HepG2 (cell line): ENCODE measurements at regions of chrX and their contacts with region 1.

Region 1: DNA sequence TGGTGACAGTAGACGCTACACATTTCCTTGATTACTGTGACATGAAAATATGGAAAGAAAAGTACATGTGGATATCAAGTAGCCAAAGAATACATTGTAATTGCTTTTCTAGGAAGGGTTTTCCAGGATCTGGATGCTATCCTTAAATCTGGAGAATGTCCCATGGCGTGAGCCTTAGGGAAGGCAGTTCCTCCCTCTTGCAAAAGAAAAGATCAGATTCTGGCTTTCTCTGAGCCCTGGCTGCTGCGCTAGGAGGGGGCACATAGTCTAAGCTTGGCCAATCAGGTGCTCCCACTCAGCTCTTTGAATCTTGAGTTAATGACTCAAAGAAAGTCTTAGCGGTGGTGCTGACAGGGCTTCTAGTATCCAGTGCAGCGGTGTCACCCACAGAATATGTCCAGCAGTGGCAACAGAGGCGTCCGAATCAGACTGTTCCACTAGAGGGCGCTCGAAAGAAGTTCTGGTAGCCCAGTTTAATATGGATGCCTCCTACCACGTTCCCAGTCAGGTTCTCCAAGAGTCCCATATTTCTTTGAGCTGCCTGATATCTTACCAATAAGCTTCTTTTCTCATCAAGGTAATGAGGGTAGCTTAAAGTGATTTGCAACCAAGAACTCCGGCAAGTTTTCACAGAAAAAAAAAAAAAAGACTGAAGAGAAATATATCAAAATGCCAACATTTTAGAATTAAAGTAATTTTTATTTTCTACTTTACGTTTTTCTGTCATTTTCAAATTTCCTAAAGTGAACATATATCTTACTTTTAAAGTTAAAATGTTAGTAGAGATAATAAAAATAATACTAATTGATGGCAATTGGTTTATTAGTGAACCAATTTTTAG is 213.4 kb upstream of the S100G start:
- DNase-seq: peak; percentile 44
- ATAC-seq: peak; percentile 91
- H3K4me3 ChIP-seq: no peak overlapping the region
- H3K27ac ChIP-seq: no peak overlapping the region
- H3K4me1 ChIP-seq: no peaks in the 10 kb centered on the region
- H3K27me3 ChIP-seq: no peaks in the 10 kb centered on the region
- CTCF ChIP-seq: peak; percentile 68
- EP300 ChIP-seq: no peak
- POLR2A ChIP-seq: no peak
- RAD21 ChIP-seq: no peak

Region 2: DNA sequence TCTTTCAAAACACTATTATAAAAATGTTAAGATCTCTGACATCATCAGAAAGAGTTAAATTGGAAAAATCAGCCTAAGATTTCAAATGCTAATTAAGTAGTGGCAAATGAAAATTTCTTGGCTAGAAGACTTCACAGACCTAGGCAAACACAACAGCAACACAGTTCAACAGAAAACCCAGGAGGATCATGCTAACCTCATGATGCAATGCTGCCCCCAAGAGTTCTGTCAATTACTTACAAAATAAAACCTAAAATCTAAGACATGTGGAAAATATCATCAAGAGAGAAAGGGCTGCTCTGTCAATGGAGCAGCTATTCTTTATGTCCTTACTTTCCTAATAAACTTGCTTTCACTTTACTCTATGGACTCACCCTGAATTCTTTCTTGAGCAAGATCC is 234.4 kb after region 1 on chrX:
- CTCF ChIA-PET with region 1: interaction called, 3 read pairs
- POLR2A ChIA-PET with region 1: no interaction called
- in situ Hi-C with region 1: no loop called
- intact Hi-C with region 1: loop called (anchors 1 kb)
- DNase-seq: peak; percentile 5
- ATAC-seq: no peak
- H3K4me3 ChIP-seq: no peak overlapping the region
- H3K27ac ChIP-seq: no peak overlapping the region
- H3K4me1 ChIP-seq: no peaks in the 10 kb centered on the region
- H3K27me3 ChIP-seq: no peaks in the 10 kb centered on the region
- CTCF ChIP-seq: peak; percentile 53
- EP300 ChIP-seq: no peak
- POLR2A ChIP-seq: no peak
- RAD21 ChIP-seq: no peak

Region 3: DNA sequence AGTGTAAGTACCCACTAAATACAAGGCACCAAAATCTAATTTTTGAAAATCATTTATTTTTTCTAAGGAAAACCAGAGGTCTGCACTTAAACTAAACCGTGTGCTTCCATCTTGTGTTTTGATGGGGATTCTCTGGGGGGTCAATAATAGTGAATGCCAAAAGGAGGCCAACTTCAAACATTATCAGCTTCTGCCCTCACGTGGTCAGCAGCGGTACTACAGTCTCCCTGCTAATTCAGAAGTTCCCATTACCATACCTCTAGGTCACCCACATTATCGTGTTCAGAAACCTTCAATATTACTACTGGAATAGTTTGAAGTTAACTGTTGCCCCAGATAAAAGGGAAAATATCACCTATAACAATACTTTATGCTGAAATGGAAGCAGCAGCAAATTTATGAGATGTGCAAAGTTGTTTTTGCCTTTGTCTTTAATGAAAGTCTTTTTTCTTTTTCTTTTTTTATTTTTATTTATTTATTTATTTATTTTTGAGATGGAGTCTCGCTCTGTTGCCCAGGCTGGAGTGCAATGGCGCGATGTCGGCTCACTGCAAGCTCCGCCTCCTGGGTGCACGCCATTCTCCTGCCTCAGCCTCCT is 258.6 kb after region 1 on chrX:
- CTCF ChIA-PET with region 1: no interaction called
- POLR2A ChIA-PET with region 1: no interaction called
- in situ Hi-C with region 1: no loop called
- intact Hi-C with region 1: loop called (anchors 1 kb)
- DNase-seq: peak; percentile 29
- ATAC-seq: peak; percentile 62; the same call in 2 of the 3 replicates
- H3K4me3 ChIP-seq: no peak overlapping the region
- H3K27ac ChIP-seq: no peak overlapping the region
- H3K4me1 ChIP-seq: peaks cover 15% of the 10 kb centered on the region
- H3K27me3 ChIP-seq: no peaks in the 10 kb centered on the region
- CTCF ChIP-seq: peak; percentile 67
- EP300 ChIP-seq: no peak
- POLR2A ChIP-seq: no peak
- RAD21 ChIP-seq: no peak